MCF 10A (cell line): ENCODE measurements at regions of chr20 and their contacts with region 1.

Region 1: DNA sequence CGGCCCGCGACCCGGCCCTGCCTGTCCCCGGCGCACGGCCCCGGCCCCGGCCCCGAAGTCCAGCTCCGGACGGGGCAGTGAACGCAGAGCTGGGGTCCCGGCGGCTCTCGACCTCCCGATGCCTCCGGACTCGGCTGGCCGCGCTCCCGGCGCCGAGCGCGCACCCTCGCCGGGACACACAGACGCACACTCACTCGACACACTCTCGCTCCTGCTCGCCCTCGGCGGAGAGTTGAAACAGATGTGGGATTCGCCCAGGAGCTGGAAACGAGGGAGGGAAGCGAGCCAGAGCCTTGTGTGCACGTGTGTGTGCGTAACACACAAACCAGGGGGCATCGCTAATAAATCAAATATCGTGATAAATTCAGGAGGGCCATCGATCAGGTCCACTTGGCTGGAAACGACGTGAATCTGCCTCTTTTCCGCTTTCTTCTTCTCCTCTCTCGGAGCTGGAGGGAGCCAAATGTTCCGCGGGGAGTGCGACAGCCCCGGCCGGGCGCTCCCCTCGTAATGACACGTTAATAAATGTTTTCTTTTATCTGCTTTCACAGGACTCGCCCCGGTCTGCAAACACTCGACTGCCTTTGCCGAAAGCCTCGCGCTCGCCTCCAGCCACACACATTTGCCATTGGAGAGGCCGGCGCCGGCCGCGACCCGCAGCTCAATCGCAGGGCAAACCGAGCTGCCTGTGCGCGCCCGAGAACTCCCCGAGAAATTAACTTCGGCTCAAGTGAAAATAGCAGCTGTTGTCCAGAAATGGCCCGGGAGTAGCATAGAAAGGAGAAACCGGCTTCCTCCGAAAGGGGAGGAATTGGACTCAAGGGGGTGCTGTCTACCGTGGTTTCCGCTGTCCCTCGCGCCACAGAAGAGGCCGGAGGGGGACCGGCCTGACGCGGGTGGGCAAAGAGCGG is 828 bp upstream of the SULF2 start:
- DNase-seq: peak; percentile 83
- H3K4me3 Mint-ChIP-seq: peak overlapping the region; percentile 72
- H3K27ac Mint-ChIP-seq: peak overlapping the region; percentile 55
- H3K4me1 Mint-ChIP-seq: peaks cover 52% of the 10 kb centered on the region
- H3K27me3 Mint-ChIP-seq: no peaks in the 10 kb centered on the region
- CTCF ChIP-seq: peak; percentile 92

Region 2: GRCh38 chr20:47620808-47621805 is 165.0 kb before region 1 on chr20:
- CTCF ChIA-PET with region 1: no interaction called
- POLR2A ChIA-PET with region 1: no interaction called
- intact Hi-C with region 1: no loop called
- DNase-seq: peak; percentile 53
- H3K4me3 Mint-ChIP-seq: no peak overlapping the region
- H3K27ac Mint-ChIP-seq: peak overlapping the region; percentile 19
- H3K4me1 Mint-ChIP-seq: peaks cover 12% of the 10 kb centered on the region
- H3K27me3 Mint-ChIP-seq: no peaks in the 10 kb centered on the region
- CTCF ChIP-seq: peak; percentile 72

Region 3: GRCh38 chr20:47663333-47664067 is 122.6 kb before region 1 on chr20:
- CTCF ChIA-PET with region 1: interaction called, 12 read pairs
- POLR2A ChIA-PET with region 1: no interaction called
- intact Hi-C with region 1: no loop called
- DNase-seq: peak; percentile 81
- H3K4me3 Mint-ChIP-seq: no peak overlapping the region
- H3K27ac Mint-ChIP-seq: peak overlapping the region; percentile 46
- H3K4me1 Mint-ChIP-seq: peaks cover 14% of the 10 kb centered on the region
- H3K27me3 Mint-ChIP-seq: no peaks in the 10 kb centered on the region
- CTCF ChIP-seq: peak; percentile 90

Region 4: DNA sequence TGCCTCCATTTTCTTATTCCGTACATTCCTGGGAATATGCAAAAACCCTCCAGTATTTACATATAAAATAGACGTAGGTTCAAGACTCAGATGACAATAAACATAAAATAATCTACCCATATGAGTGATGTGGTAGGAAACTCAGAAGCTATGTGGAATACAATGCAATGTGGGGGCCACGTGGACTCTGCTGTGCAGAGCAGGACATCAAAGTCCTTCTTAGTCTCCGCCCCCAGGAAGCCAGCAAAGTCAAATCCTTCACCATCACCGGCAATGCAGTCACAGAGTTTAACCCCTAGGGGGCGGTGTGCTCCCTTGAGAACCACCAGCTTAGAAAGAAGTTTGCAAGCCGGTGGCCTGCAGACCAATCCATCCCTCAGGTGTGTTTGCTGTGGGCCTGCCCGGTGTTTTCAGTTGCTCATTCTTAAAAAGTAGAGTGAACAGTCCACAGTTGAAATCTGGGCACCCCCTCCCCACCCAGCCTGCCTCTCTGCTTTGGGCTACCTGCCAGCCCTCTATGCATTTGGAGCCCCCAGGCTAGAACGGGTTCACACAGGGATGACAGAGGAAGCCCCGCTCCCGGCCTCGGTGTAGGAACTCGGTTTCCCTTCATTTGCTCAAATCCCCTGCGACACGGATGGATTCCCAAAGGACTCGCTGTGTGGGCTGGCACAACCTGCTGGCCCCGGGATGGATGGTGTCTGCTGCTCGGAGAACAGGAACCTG is 60.7 kb before region 1 on chr20:
- CTCF ChIA-PET with region 1: interaction called, 11 read pairs
- POLR2A ChIA-PET with region 1: interaction called, 4 read pairs
- intact Hi-C with region 1: loop called (anchors 1 kb)
- DNase-seq: peak; percentile 86
- H3K4me3 Mint-ChIP-seq: no peak overlapping the region
- H3K27ac Mint-ChIP-seq: no peak overlapping the region
- H3K4me1 Mint-ChIP-seq: no peaks in the 10 kb centered on the region
- H3K27me3 Mint-ChIP-seq: no peaks in the 10 kb centered on the region
- CTCF ChIP-seq: peak; percentile 94

Region 5: DNA sequence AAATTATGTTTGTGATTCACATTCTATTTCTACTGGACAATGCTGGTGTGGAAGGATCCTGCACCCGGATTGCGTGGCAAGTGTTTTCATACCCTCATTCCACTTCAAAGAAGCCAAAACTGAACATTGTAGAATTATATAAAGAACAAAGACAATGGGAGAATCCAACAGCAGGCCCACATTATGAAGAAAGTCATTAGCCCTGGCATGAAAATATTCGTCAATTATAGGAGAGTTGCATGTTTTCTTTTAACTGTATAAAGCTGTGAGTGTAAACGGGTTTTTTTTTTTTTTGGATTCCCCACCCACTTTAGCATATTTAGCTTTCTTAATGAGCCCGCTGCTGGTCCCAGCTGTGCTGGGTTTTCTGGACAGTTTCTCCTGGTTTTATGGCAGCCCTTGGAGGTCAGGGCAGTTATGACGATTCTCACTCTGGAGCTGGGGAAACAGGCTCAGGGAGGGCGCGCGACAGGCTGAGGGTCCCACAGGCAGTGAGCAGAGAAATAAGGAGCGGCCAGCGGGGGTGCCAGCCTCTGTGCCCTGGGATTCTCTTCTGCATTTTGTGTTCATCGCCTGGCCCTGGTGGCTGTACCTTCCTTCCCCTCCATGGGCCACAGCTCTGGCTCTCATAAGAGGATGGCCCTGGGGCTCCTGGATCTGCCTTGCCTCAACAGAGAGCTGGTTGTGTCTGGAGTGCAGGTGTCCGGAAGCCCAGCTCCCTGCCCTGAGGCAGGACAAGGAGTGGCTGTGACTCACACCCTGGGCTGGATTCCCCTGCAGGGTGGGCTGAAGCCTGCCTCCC is 23.2 kb after region 1 on chr20:
- CTCF ChIA-PET with region 1: interaction called, 13 read pairs
- POLR2A ChIA-PET with region 1: interaction called, 5 read pairs
- intact Hi-C with region 1: no loop called
- DNase-seq: peak; percentile 94
- H3K4me3 Mint-ChIP-seq: peak overlapping the region; percentile 54
- H3K27ac Mint-ChIP-seq: peak overlapping the region; percentile 91
- H3K4me1 Mint-ChIP-seq: peaks cover 33% of the 10 kb centered on the region
- H3K27me3 Mint-ChIP-seq: no peaks in the 10 kb centered on the region
- CTCF ChIP-seq: no peak

Region 6: DNA sequence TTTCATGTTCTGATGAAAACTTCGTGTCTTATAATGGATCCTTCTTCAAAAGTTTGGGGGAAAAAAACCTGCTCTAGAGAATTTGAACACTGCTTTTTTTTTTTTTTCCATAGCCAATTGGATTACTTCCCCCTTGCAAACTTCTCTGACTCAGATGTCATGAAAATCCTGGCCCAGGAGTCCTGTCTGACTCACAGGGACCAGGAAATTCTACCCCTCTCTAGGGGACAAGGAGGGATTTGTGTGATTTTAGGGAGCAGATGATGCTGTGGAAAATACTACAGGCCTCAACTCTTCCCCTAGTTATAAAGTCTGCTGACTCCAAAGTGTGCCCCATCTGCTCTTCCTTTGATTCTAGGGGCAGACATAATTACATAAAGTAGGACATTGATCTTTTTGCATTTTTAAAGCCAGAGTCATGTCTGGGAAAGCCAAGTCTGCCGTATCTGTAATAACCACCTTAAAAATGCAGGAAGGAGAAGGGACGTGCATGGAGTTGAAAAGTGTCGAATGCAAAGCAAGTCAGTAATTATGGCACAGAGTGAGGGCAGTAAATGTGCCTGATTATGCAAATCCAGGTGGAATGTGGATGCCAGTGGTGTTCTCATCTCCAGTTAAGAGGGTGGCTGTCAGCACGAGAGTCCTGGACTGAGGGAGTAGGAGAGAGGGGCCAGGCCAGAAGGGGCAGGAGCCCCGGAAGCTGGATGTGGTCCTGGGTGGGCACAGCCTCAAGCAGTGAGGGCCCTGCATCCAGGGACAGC is 143.4 kb after region 1 on chr20:
- CTCF ChIA-PET with region 1: interaction called, 26 read pairs
- POLR2A ChIA-PET with region 1: interaction called, 72 read pairs
- intact Hi-C with region 1: no loop called
- DNase-seq: peak; percentile 79
- H3K4me3 Mint-ChIP-seq: no peak overlapping the region
- H3K27ac Mint-ChIP-seq: peak overlapping the region; percentile 94
- H3K4me1 Mint-ChIP-seq: peaks cover 52% of the 10 kb centered on the region
- H3K27me3 Mint-ChIP-seq: no peaks in the 10 kb centered on the region
- CTCF ChIP-seq: no peak

Region 7: GRCh38 chr20:48051794-48052474 is 265.8 kb after region 1 on chr20:
- CTCF ChIA-PET with region 1: interaction called, 11 read pairs
- POLR2A ChIA-PET with region 1: interaction called, 4 read pairs
- intact Hi-C with region 1: no loop called
- DNase-seq: peak; percentile 96
- H3K4me3 Mint-ChIP-seq: no peak overlapping the region
- H3K27ac Mint-ChIP-seq: peak overlapping the region; percentile 94
- H3K4me1 Mint-ChIP-seq: peaks cover 20% of the 10 kb centered on the region
- H3K27me3 Mint-ChIP-seq: no peaks in the 10 kb centered on the region
- CTCF ChIP-seq: no peak

Region 8: DNA sequence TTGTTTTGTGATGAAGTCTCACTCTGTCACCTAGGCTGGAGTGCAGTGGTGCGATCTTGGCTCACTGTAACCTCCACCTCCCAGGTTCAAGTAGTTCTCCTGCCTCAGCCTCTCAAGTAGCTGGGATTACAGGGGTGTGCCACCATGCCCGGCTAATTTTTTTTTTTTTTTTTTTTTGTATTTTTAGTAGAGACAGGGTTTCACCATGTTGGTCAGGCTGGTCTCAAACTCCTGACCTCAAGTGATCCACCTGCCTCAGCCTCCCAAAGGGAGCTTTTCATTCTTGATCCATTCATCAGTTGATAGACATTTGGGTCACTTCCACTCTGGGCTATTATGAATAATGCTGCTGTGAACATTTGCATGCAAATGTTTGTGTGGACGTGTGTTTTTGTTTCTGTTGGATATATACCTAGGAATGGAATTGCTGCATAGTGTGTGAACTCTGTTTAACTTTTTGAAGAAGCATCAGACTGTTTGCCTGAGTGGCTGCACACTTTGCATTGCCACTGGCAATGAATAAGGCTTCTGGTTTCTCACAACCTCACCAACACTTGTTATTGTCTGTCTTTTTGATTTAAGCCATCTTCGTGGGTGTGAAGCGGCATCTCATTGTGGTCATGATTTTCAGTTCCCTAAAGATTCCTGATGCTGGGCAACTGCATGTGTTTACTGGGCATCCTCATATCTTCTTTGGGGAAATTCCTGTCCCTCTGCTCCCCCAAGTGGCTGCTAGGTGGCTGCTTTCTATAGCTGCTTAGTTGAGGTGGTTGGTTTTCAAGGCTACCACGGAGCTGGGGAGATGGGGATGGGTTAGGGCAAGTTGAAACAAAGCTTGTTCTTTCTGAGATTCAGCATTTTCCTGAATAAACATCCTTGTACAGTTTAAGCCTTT is 402.8 kb after region 1 on chr20:
- CTCF ChIA-PET with region 1: interaction called, 27 read pairs
- POLR2A ChIA-PET with region 1: interaction called, 25 read pairs
- intact Hi-C with region 1: loop called (anchors 1 kb)
- DNase-seq: peak; percentile 68
- H3K4me3 Mint-ChIP-seq: no peak overlapping the region
- H3K27ac Mint-ChIP-seq: no peak overlapping the region
- H3K4me1 Mint-ChIP-seq: peaks cover 23% of the 10 kb centered on the region
- H3K27me3 Mint-ChIP-seq: no peaks in the 10 kb centered on the region
- CTCF ChIP-seq: peak; percentile 37

Region 9: GRCh38 chr20:48502850-48503815 is 717.0 kb after region 1 on chr20:
- CTCF ChIA-PET with region 1: no interaction called
- POLR2A ChIA-PET with region 1: no interaction called
- intact Hi-C with region 1: no loop called
- DNase-seq: no peak
- H3K4me3 Mint-ChIP-seq: no peak overlapping the region
- H3K27ac Mint-ChIP-seq: no peak overlapping the region
- H3K4me1 Mint-ChIP-seq: no peaks in the 10 kb centered on the region
- H3K27me3 Mint-ChIP-seq: no peaks in the 10 kb centered on the region
- CTCF ChIP-seq: no peak